ENCODE measurements at regions of chr9 and their contacts with region 1.

Region 1: DNA sequence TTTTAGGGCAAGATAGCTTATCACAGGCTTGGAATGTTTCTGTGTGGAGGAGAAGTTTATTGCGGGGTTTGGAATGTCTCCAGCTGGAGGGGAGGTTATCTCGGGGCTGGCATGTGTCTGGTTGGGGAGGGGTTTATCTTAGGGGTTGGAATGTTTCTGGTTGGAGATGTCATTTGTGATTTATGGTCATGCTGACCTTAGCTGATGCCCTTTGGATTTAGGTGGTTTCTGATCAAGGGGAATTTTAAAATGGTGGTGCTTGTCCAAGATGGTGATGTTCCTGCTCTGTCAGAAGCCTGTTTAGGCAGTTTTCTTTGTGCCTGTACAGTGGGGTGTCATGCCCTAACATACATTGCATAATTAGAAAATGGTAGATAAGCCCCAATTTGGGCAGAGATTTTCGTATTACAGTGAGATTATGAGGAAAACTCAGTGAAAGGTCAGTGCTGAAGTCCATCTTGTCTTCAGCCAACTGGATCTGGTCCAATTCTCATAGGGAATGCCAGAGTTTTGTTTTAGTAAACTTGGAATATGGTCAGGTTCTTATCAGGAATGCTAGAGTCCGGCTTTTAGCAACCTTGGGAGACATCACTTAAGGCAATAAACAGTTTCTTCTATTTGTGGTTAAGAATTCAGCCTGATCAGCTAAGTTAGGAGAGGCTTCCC is 14.3 kb downstream of the CDK20 start:
- DNase-seq: no peak
- ATAC-seq: peak; percentile 51

Region 2: DNA sequence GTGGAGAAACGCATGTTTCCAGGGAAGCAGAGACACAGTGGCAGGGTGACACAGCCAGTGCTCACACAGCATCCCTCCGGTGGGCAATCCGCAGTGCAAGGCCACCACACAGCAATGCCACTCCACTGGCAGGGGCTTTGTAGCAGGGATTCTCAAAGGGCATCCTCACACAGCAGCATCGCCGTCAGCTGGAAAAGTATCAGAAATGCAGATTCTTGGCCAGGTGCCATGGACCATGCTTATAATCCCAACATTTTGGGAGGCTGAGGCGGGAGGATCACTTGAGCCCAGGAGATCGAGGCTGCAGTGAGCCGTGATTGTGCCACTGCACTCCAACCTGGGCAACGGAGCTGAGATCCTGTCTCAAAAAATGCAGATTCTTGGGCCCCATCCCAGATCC is 71.9 kb after region 1 on chr9:
- intact Hi-C with region 1: loop called (anchors 2 kb)
- DNase-seq: no peak
- ATAC-seq: no peak

Region 3: DNA sequence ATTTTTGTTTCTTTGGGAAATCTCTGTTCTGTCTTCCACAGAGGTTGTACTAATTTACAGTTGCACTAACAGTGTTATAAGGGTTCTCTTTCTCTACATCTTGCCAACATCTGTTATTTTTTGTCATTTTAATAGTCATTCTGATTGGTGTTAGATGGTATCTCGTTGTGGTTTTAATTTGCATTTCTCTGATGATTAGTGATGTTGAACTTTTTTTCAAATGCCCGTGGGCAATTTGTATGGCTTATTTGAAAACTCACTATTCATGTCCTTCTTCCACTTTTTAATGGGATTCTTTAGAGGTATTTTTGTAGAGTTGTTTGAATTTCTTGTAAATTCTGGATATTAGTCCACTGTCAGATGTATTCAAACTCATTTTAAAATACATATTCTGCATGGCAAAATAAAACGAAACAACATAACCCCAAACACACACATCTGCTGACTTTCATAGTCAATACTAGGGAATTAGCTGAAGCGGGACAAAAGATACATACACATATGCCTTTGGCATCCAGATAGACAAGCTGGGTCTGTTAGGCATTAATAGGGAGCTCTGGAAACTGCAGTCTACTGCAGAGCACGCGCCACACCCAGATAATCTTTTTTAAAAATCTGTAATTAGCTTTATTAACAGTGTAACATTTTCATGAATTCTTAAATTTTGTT is 184.0 kb after region 1 on chr9:
- intact Hi-C with region 1: no loop called
- DNase-seq: no peak
- ATAC-seq: no peak